Endothelial cell of umbilical vein (primary cell): ENCODE measurements at regions of chr18 and their contacts with region 1.

Region 1: GRCh38 chr18:42053188-42053781 is 98.3 kb downstream of the PIK3C3 start:
- DNase-seq: peak; percentile 66
- H3K4me3 ChIP-seq: no peak overlapping the region
- H3K27ac ChIP-seq: no peak overlapping the region
- H3K4me1 ChIP-seq: peaks cover 5% of the 10 kb centered on the region
- H3K27me3 ChIP-seq: no peaks in the 10 kb centered on the region
- CTCF ChIP-seq: peak; percentile 63 to 67
- POLR2A ChIP-seq: no peak

Region 2: DNA sequence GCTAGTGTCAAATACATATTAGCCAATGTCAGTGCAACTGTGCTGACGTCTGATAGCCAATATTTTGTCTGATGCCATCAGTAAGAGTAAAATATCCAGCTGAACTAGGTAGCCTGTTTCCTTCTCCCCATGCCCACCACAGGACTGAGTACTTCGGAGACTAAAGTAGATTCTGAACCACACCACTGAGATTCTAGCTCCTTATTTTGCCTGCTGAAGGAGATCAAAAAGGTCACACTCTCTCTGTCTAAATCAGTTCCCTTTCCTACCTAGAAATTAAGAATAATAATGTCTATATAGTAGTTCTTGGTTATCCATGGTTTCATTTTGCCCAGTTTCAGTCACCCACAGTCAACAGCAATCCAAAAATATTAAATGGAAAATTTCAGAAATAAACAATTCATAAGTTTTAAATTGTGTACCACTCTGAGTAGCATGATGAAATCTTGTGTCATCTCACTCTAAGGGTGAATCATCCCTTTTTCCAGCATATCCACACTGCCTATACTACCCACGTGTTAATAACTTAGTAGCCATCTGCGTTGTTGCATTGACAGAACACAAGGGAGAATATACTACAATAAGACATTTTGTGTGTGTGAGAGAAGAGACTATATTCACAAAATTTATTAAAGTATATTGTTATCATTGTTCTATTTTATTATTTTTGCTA is 1141.6 kb before region 1 on chr18:
- CTCF ChIA-PET with region 1: no interaction called
- POLR2A ChIA-PET with region 1: no interaction called
- dilution Hi-C with region 1: no loop called
- intact Hi-C with region 1: no loop called
- DNase-seq: no peak
- H3K4me3 ChIP-seq: no peak overlapping the region
- H3K27ac ChIP-seq: no peak overlapping the region
- H3K4me1 ChIP-seq: no peaks in the 10 kb centered on the region
- H3K27me3 ChIP-seq: no peaks in the 10 kb centered on the region
- CTCF ChIP-seq: no peak
- POLR2A ChIP-seq: no peak

Region 3: GRCh38 chr18:42028247-42028832 is 24.9 kb before region 1 on chr18:
- CTCF ChIA-PET with region 1: interaction called, 47 read pairs
- POLR2A ChIA-PET with region 1: no interaction called
- dilution Hi-C with region 1: no loop called
- intact Hi-C with region 1: no loop called
- DNase-seq: peak; percentile 47
- H3K4me3 ChIP-seq: no peak overlapping the region
- H3K27ac ChIP-seq: no peak overlapping the region
- H3K4me1 ChIP-seq: no peaks in the 10 kb centered on the region
- H3K27me3 ChIP-seq: no peaks in the 10 kb centered on the region
- CTCF ChIP-seq: peak; percentile 67 to 70
- POLR2A ChIP-seq: no peak

Region 4: GRCh38 chr18:42072407-42072806 is 19.1 kb after region 1 on chr18:
- CTCF ChIA-PET with region 1: interaction called, 17 read pairs
- POLR2A ChIA-PET with region 1: no interaction called
- dilution Hi-C with region 1: no loop called
- intact Hi-C with region 1: no loop called
- DNase-seq: no peak
- H3K4me3 ChIP-seq: no peak overlapping the region
- H3K27ac ChIP-seq: no peak overlapping the region
- H3K4me1 ChIP-seq: no peaks in the 10 kb centered on the region
- H3K27me3 ChIP-seq: no peaks in the 10 kb centered on the region
- CTCF ChIP-seq: no peak
- POLR2A ChIP-seq: no peak

Region 5: DNA sequence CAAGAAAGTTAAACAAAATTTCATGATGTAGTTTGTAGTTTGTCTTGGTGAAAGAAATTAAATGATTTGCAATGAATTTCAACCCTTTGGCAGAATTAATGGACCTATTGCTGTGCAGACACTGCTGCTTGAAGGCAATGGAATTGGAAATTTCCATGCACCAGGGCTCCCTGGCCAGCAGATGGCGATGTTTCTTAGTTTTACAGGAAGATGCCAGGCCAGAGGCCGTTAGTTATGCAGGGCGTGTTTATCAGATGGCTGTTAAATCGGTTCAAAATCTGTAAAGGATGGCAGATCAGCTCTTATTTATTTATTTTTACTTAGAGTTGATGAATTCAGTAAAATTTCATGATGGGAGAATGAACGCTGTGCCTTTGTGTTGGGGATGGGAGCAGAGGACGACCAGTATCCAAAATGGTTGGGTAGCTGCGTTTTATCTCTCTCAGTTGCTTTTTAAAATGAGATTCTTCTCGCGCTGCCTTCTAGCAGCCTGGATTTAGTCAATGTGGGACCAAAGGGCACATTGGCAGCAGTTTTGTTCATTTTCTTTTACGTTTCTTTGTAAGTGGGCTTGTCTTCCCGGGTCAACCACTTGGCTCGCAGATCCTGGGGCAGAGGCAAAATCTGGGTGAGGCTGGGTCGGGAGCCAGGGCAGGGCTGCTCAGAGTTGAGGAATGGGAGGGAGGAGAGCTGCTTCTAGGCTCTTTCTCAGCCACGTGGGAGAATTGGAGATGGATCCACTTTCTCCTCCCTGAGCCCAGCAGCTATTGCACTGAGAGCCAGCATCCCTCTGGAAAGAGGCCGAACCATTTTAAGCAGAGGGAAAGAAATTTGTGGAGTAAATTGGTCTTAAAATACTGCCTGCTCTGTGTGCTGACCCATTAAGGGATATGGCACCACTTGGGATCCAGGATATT is 245.7 kb after region 1 on chr18:
- CTCF ChIA-PET with region 1: interaction called, 6 read pairs
- POLR2A ChIA-PET with region 1: no interaction called
- dilution Hi-C with region 1: no loop called
- intact Hi-C with region 1: loop called (anchors 1 kb)
- DNase-seq: peak; percentile 61
- H3K4me3 ChIP-seq: no peak overlapping the region
- H3K27ac ChIP-seq: no peak overlapping the region
- H3K4me1 ChIP-seq: no peaks in the 10 kb centered on the region
- H3K27me3 ChIP-seq: no peaks in the 10 kb centered on the region
- CTCF ChIP-seq: peak; percentile 72 to 78
- POLR2A ChIP-seq: no peak

Region 6: DNA sequence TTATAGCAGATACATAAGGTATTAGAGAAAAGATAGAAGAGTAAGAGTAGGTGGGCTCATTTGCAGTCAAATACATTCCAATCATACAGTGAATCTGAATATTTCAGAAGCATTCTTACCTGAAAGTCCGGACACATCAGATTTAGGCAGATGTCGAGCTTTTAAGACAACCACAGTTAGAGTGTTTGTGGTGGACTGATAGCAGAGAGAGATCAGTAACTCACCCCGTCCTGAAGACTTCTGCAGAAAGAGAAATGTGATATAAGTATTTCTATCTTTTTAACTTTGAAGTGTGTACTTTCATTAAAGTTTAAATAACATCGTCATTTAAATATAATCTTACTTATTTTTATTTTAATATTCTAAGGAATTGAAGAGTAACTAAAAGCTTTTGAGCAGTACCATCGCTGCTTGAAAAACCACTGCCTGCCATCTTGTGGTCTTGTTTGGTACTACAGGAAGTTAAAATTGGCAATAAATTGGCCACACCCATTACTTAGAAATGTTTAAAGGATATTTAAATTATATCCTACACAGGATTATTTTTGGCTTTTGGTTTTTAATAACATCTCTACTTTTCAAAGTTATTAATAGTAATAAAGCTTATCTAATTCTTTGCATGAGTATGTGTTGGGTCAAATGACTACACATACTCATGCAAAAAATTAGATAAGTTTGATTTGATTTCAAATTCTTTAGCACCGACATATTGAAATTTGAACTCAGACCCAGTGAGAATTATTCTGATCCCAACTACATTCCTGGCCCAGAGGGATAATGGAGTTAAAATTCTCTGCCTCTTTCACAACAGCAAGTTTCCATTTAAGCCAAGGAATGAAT is 1218.5 kb after region 1 on chr18:
- CTCF ChIA-PET with region 1: interaction called, 27 read pairs
- POLR2A ChIA-PET with region 1: no interaction called
- dilution Hi-C with region 1: no loop called
- intact Hi-C with region 1: loop called (anchors 2 kb)
- DNase-seq: peak; percentile 63
- H3K4me3 ChIP-seq: no peak overlapping the region
- H3K27ac ChIP-seq: no peak overlapping the region
- H3K4me1 ChIP-seq: no peaks in the 10 kb centered on the region
- H3K27me3 ChIP-seq: no peaks in the 10 kb centered on the region
- CTCF ChIP-seq: peak; percentile 32 to 42
- POLR2A ChIP-seq: no peak

Region 7: GRCh38 chr18:43596105-43596712 is 1542.9 kb after region 1 on chr18:
- CTCF ChIA-PET with region 1: interaction called, 10 read pairs
- POLR2A ChIA-PET with region 1: no interaction called
- dilution Hi-C with region 1: no loop called
- intact Hi-C with region 1: loop called (anchors 2 kb)
- DNase-seq: peak; percentile 33
- H3K4me3 ChIP-seq: no peak overlapping the region
- H3K27ac ChIP-seq: no peak overlapping the region
- H3K4me1 ChIP-seq: no peaks in the 10 kb centered on the region
- H3K27me3 ChIP-seq: no peaks in the 10 kb centered on the region
- CTCF ChIP-seq: peak; percentile 15 to 35
- POLR2A ChIP-seq: no peak